Posterior vena cava (tissue), 2 donors: ENCODE measurements at regions of chr2 and their contacts with region 1.

Region 1: GRCh38 chr2:215900203-215900611 is 113.1 kb downstream of the MREG start:
- DNase-seq: peak; percentile 80

Region 2: DNA sequence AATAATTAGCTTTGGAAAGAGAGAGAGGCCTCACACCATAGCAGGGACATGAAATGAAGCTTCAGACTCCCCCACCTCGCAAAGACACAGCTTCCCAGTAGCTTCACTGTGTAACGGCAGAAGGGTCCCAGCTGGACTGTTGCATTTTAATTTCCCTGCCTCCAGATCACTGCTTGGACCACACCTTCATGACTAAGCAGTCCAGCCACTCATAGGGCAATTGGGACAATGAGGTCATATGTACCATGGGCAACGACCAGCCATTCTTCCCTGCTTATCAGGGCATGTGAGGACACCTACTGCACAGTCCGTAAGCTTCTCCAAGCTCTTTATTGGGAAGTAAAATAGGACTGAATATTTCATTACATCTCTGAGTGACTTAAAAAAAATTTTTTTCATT is 69.9 kb before region 1 on chr2:
- intact Hi-C with region 1: loop called in 1 of 2 experiments (anchors 10 kb)
- DNase-seq: no peak

Region 3: GRCh38 chr2:216465580-216466197 is 565.5 kb after region 1 on chr2:
- intact Hi-C with region 1: no loop called
- DNase-seq: no peak